ENCODE measurements at regions of chr10 and their contacts with region 1.

Region 1: GRCh38 chr10:67893637-67894036 is 9.2 kb downstream of the SIRT1 start:
- DNase-seq: no peak
- H3K4me3 ChIP-seq: no peak overlapping the region
- H3K27ac ChIP-seq: no peak overlapping the region
- H3K4me1 ChIP-seq: no peaks in the 10 kb centered on the region
- H3K27me3 ChIP-seq: no peaks in the 10 kb centered on the region
- CTCF ChIP-seq: no peak

Region 2: GRCh38 chr10:67837541-67838314 is 55.9 kb before region 1 on chr10 and contains the start of gene DNAJC12:
- dilution Hi-C with region 1: loop called (anchors 10 kb)
- DNase-seq: no peak
- H3K4me3 ChIP-seq: no peak within 1 kb of the TSS
- H3K27ac ChIP-seq: no peak within 1 kb of the TSS
- H3K4me1 ChIP-seq: no peaks in the 10 kb centered on the region
- H3K27me3 ChIP-seq: no peaks in the 10 kb centered on the region
- CTCF ChIP-seq: no peak
- polyA plus RNA-seq, gene DNAJC12: 0.31 to 0.45 TPM (median 0.31 TPM) in 3 replicates

Region 3: DNA sequence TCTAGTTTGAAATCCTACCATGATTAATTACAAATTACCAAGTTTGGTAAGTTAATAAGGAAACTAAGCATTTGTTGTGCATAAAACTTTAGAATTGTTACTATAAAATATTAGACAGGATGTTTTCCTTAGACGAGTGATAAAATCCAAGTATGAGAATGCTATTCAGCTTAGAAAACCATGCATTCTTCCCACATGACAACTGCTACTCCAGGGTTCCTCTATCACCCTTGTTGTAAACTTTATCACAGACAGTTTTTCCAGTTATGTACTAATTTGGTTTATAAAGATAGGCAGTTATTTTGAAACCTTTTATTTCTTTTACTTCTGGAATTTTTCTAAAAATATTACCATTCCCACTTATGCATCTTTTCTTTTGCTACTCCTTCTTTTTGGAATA is 42.8 kb after region 1 on chr10:
- dilution Hi-C with region 1: no loop called
- DNase-seq: no peak
- H3K4me3 ChIP-seq: no peak overlapping the region
- H3K27ac ChIP-seq: no peak overlapping the region
- H3K4me1 ChIP-seq: no peaks in the 10 kb centered on the region
- H3K27me3 ChIP-seq: no peaks in the 10 kb centered on the region
- CTCF ChIP-seq: no peak

Region 4: DNA sequence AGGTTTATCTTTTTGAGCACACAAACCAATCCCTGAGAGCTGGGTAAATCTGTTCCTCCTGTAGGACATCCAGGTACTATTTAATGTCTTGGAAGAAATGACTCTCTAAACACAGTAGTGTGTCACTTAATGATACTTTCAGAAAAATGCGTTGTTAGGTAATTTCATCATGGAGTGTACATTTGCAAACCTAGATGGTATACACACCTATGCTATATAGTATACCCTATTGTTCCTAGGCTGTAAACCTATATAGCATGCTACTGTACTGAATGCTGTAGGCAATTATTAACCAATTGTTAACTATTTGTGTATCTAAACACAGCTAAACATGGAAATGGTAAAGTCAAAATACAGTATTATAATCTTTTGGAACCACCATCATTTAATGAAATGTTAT is 503.4 kb after region 1 on chr10:
- dilution Hi-C with region 1: no loop called
- DNase-seq: no peak
- H3K4me3 ChIP-seq: no peak overlapping the region
- H3K27ac ChIP-seq: no peak overlapping the region
- H3K4me1 ChIP-seq: no peaks in the 10 kb centered on the region
- H3K27me3 ChIP-seq: no peaks in the 10 kb centered on the region
- CTCF ChIP-seq: no peak